ENCODE measurements at regions of chr11 and their contacts with region 1.

Region 1: GRCh38 chr11:79440441-79441194 is at the start of gene TENM4:
- DNase-seq: peak; percentile 61
- H3K4me3 Mint-ChIP-seq: peak within 1 kb of the TSS; percentile 73
- H3K27ac Mint-ChIP-seq: no peak within 1 kb of the TSS
- H3K4me1 Mint-ChIP-seq: peaks cover 28% of the 10 kb centered on the region
- H3K27me3 Mint-ChIP-seq: no peaks in the 10 kb centered on the region
- CTCF ChIP-seq: peak; percentile 37
- total RNA-seq, gene TENM4: 5.0 and 9.9 TPM in 2 replicates

Region 2: DNA sequence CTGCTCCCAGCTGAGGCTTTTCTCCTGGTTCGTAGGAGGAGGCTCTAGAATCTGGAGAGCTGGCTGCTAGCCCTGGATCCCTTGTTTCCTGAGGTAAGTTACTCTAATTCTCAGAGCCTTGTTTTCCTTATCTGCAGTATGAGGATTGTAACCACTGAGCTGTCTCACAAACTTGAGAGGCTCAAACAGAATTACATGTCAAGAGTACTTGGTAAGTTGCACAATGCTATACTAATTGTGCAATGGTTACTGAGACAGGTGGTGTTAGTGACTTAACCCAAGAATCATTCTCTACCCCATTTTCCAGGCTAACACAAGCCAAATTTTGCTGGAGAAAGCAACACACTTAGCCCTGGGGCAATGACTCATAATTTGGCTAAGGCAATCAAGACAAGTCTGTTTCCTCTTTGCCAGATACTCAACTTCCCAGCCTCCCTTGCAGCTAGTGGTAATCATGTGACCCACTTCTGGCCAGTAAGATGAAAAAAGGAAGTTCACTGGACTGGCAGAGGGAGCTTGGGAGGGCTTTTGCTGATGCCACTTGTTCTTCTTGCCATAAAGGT is 347.7 kb before region 1 on chr11:
- CTCF ChIA-PET with region 1: no interaction called
- POLR2A ChIA-PET with region 1: interaction called, 3 read pairs
- intact Hi-C with region 1: loop called (anchors 10 kb)
- DNase-seq: peak; percentile 100
- H3K4me3 Mint-ChIP-seq: peak overlapping the region; percentile 66
- H3K27ac Mint-ChIP-seq: peak overlapping the region; percentile 84
- H3K4me1 Mint-ChIP-seq: peaks cover 36% of the 10 kb centered on the region
- H3K27me3 Mint-ChIP-seq: no peaks in the 10 kb centered on the region
- CTCF ChIP-seq: no peak

Region 3: DNA sequence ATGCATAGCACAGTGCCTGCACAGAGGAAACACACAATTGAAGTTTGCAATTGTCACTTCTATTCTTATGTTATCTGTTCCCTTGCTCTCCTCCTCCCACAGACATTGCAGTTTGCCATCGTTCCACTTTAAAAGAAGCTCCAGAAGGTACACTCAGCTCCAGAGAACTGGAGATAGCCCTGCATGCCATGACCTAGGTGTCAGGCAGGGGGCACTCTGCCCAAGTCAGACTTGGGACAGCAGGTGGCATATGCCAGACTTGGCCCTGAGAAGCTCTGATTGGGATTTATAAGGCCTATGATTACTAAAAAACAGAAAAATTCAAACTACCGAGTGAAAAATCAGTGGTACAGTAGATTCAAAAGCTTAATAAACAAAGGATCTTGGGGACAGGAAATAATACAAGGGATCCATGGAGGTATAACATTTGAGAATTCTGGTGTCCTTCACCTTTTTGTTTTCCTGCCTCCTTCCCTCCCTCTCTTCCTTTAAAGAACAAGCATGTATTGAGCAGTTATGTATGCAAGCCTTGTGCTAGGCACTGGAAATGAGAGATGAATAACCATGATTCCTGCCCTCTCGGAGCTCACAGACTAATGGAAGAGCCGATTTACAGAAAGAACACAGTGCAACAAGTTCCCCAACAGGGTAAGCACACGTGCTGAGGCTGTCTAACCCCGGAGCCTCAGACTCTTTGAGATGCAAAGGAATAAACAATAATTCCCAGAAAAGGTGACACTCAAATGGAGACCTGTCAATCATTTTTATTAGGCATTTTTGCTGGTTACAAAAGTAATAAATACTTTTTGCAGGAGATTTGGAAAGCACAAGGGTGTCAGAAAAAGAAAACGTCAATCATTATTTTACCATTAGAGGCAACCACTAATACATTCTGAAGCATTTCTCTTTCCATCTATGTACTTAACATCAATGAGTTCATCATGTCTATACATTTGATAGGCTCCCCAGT is 39.6 kb before region 1 on chr11:
- CTCF ChIA-PET with region 1: interaction called, 39 read pairs
- POLR2A ChIA-PET with region 1: interaction called, 9 read pairs
- intact Hi-C with region 1: loop called (anchors 1 kb)
- DNase-seq: peak; percentile 70
- H3K4me3 Mint-ChIP-seq: no peak overlapping the region
- H3K27ac Mint-ChIP-seq: no peak overlapping the region
- H3K4me1 Mint-ChIP-seq: peaks cover 11% of the 10 kb centered on the region
- H3K27me3 Mint-ChIP-seq: no peaks in the 10 kb centered on the region
- CTCF ChIP-seq: peak; percentile 94

Region 4: GRCh38 chr11:79419120-79419519 is 21.5 kb before region 1 on chr11:
- CTCF ChIA-PET with region 1: interaction called, 20 read pairs
- POLR2A ChIA-PET with region 1: interaction called, 15 read pairs
- intact Hi-C with region 1: no loop called
- DNase-seq: peak; percentile 96
- H3K4me3 Mint-ChIP-seq: peak overlapping the region; percentile 16
- H3K27ac Mint-ChIP-seq: peak overlapping the region; percentile 80
- H3K4me1 Mint-ChIP-seq: peaks cover 45% of the 10 kb centered on the region
- H3K27me3 Mint-ChIP-seq: no peaks in the 10 kb centered on the region
- CTCF ChIP-seq: no peak

Region 5: DNA sequence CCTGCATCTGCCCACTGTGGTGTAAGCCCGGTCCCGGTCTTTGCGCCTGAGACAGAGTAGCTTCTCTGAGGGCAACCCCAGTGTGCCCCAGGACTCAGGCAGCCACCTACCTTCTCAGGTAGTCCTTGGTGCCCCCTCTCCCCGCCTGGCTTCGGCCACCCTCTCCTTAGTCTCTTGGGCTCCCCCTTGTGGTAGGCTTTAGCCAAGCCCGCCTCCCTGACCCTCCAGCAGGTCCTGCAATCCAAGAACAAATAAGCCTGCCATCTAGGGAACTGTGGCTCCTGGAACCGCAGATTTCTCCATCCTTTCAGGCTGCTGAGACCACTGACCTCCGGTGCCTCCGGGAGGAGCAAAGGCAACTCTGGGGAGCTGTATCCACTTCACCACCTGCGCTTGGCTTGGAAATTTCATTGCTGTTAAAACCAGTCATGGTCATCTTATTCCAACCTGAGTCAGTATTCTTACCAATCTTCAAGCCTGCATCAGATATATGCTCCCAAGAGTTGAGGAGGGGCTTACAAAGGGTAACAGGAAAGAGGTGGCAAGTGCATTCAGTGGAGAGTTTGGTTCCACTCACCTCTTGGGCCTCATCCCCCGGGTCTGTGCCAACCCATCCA is 53.0 kb after region 1 on chr11:
- CTCF ChIA-PET with region 1: interaction called, 49 read pairs
- POLR2A ChIA-PET with region 1: interaction called, 4 read pairs
- intact Hi-C with region 1: loop called (anchors 2 kb)
- DNase-seq: peak; percentile 78
- H3K4me3 Mint-ChIP-seq: no peak overlapping the region
- H3K27ac Mint-ChIP-seq: no peak overlapping the region
- H3K4me1 Mint-ChIP-seq: peaks cover 7% of the 10 kb centered on the region
- H3K27me3 Mint-ChIP-seq: peaks cover 20% of the 10 kb centered on the region
- CTCF ChIP-seq: peak; percentile 89

Region 6: GRCh38 chr11:79617561-79617960 is 176.9 kb after region 1 on chr11:
- CTCF ChIA-PET with region 1: no interaction called
- POLR2A ChIA-PET with region 1: no interaction called
- intact Hi-C with region 1: no loop called
- DNase-seq: no peak
- H3K4me3 Mint-ChIP-seq: no peak overlapping the region
- H3K27ac Mint-ChIP-seq: no peak overlapping the region
- H3K4me1 Mint-ChIP-seq: peaks cover 11% of the 10 kb centered on the region
- H3K27me3 Mint-ChIP-seq: no peaks in the 10 kb centered on the region
- CTCF ChIP-seq: no peak